MCF 10A (cell line): ENCODE measurements at regions of chr4 and their contacts with region 1.

Region 1: GRCh38 chr4:106369456-106370060 is 980 bp upstream of the GIMD1 start:
- DNase-seq: peak; percentile 70
- H3K4me3 Mint-ChIP-seq: no peak overlapping the region
- H3K27ac Mint-ChIP-seq: no peak overlapping the region
- H3K4me1 Mint-ChIP-seq: peaks cover 12% of the 10 kb centered on the region
- H3K27me3 Mint-ChIP-seq: no peaks in the 10 kb centered on the region
- CTCF ChIP-seq: peak; percentile 74

Region 2: GRCh38 chr4:106266201-106266600 is 103.4 kb before region 1 on chr4:
- CTCF ChIA-PET with region 1: no interaction called
- POLR2A ChIA-PET with region 1: no interaction called
- intact Hi-C with region 1: loop called (anchors 1 kb)
- DNase-seq: peak; percentile 52
- H3K4me3 Mint-ChIP-seq: no peak overlapping the region
- H3K27ac Mint-ChIP-seq: no peak overlapping the region
- H3K4me1 Mint-ChIP-seq: peaks cover 13% of the 10 kb centered on the region
- H3K27me3 Mint-ChIP-seq: no peaks in the 10 kb centered on the region
- CTCF ChIP-seq: peak; percentile 58

Region 3: DNA sequence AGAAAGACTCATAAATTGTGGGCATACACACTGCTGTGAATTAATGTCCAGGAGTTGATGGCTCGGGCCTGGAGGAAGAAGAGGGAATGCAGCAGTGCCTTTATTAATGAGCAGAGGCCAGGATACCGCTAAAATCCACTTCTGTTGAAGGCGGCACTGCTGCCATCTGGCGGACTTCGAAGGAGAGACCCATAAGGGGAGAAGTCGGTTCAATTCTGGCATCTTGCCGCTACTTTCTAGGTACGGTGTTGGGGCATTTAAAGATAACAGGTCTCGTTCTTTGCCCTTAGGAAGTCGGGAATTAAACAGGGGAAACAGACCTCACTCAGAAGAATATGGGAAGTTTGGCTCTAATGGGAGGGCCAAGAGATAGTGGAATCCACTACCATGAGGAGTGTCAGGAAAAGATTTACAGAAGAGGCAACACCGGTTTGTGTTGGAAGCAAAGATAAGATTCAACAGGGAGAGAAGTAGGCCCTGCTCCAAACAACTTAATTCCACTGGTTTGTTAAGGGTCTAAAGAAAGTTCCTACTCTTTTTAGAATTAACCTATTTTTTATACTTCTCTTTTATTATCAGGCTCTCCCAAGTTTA is 132.6 kb after region 1 on chr4:
- CTCF ChIA-PET with region 1: interaction called, 19 read pairs
- POLR2A ChIA-PET with region 1: no interaction called
- intact Hi-C with region 1: loop called (anchors 1 kb)
- DNase-seq: peak; percentile 58
- H3K4me3 Mint-ChIP-seq: no peak overlapping the region
- H3K27ac Mint-ChIP-seq: no peak overlapping the region
- H3K4me1 Mint-ChIP-seq: peaks cover 5% of the 10 kb centered on the region
- H3K27me3 Mint-ChIP-seq: no peaks in the 10 kb centered on the region
- CTCF ChIP-seq: peak; percentile 40

Region 4: GRCh38 chr4:106818764-106819163 is 449.2 kb after region 1 on chr4:
- CTCF ChIA-PET with region 1: interaction called, 27 read pairs
- POLR2A ChIA-PET with region 1: no interaction called
- intact Hi-C with region 1: no loop called
- DNase-seq: no peak
- H3K4me3 Mint-ChIP-seq: no peak overlapping the region
- H3K27ac Mint-ChIP-seq: no peak overlapping the region
- H3K4me1 Mint-ChIP-seq: no peaks in the 10 kb centered on the region
- H3K27me3 Mint-ChIP-seq: no peaks in the 10 kb centered on the region
- CTCF ChIP-seq: peak; percentile 24

Region 5: GRCh38 chr4:107519053-107519452 is 1149.5 kb after region 1 on chr4:
- CTCF ChIA-PET with region 1: interaction called, 3 read pairs
- POLR2A ChIA-PET with region 1: no interaction called
- intact Hi-C with region 1: loop called (anchors 5 kb)
- DNase-seq: peak; percentile 56
- H3K4me3 Mint-ChIP-seq: no peak overlapping the region
- H3K27ac Mint-ChIP-seq: no peak overlapping the region
- H3K4me1 Mint-ChIP-seq: no peaks in the 10 kb centered on the region
- H3K27me3 Mint-ChIP-seq: no peaks in the 10 kb centered on the region
- CTCF ChIP-seq: peak; percentile 50